ENCODE measurements at regions of chr12 and their contacts with region 1.

Region 1: DNA sequence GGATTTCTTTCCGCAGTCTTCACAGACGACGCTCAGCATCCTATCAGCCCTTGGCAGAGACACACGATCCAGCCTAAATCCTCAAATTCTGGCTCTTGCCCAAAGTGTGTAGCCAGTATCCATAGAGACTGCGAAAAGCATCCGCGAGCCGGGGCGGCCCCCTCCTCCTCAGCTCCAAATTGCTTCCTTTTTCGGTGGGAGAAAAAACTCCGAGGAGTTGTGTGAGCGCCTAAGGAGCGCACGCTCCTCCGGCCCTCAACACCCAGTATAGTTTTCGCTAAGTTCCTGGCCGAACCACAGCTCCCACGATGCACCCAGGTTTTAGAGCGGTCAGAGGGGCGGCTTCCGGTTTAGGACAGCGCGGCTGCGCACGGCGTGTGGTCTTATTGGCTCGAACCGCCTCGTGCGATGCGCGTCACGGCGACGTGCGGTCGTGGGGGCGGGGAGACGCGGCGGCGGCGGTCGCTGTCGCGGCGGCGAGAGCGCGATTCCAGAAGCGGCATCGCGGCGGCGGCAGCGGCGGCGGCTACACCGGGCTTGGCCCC is at the start of gene ADIPOR2:
- DNase-seq: peak; percentile 91 to 96 (median 95)
- ATAC-seq: peak; percentile 99
- H3K4me3 ChIP-seq: peak within 1 kb of the TSS; percentile 76
- H3K4me3 Mint-ChIP-seq: peak within 1 kb of the TSS; percentile 94 to 99 (median 98)
- H3K27ac ChIP-seq: peak within 1 kb of the TSS; percentile 91
- H3K27ac Mint-ChIP-seq: peak within 1 kb of the TSS; percentile 96 to 100 (median 98)
- H3K4me1 ChIP-seq: peaks cover 7 to 9% of the 10 kb centered on the region in 2 donors
- H3K4me1 Mint-ChIP-seq: peaks cover 26 to 59% (median 52%) of the 10 kb centered on the region in 7 donors
- H3K27me3 ChIP-seq: no peaks in the 10 kb centered on the region
- H3K27me3 Mint-ChIP-seq: peaks cover 0 to 13% (median 0%) of the 10 kb centered on the region in 5 donors
- total RNA-seq, gene ADIPOR2: 19.8 to 51.4 (median 36.4) TPM

Region 2: DNA sequence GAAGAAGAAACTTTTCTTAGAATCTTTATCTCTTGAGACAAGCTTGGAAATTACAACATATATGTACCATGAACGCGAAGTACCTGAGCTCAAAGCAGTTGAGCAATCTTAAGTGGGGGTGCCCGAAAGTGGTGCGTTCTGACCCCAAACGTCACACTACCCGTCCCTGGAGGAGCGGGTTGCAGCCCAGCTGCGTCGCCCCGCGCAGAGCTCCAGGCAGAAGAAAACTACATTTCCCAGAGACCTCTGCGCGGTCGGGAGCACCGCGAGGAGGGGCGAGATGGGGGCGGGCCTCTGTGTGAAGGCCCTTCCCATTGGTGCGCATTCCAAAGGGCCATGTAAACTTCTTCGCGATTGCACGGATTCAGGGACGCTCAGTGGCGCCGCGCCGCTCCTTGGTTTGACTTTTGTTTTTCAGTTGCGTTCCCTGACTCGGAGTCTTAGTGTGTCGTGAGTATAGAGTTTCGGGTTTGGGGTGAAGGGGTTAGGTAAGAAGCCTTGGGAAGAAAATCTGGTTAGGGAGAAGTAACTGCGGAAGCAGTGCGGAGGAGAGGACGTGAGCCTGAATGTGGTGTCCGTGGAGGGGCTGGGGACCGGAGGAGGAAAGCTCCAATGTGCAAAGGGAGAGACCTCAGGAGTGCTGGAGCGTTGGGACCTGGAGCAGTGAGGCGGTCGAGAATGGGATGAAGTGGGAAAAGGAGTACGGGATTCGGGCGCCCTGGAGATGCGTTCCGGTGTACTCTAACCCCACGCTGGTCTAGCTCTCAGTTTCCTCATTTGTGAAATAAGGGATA is 1289.2 kb before region 1 on chr12 and contains the start of gene CCDC77:
- CTCF ChIA-PET with region 1: no interaction called
- POLR2A ChIA-PET with region 1: no interaction called
- intact Hi-C with region 1: loop called in 1 of 2 experiments (anchors 5 kb)
- DNase-seq: peak; percentile 91 to 97 (median 95)
- ATAC-seq: peak; percentile 100
- H3K4me3 ChIP-seq: peak within 1 kb of the TSS; percentile 94
- H3K4me3 Mint-ChIP-seq: no peak within 1 kb of the TSS
- H3K27ac ChIP-seq: peak within 1 kb of the TSS; percentile 71
- H3K27ac Mint-ChIP-seq: peak within 1 kb of the TSS in 1 of 9 donors; percentile 62
- H3K4me1 ChIP-seq: peaks cover 4 to 13% of the 10 kb centered on the region in 2 donors
- H3K4me1 Mint-ChIP-seq: peaks cover 0 to 9% (median 5%) of the 10 kb centered on the region in 7 donors
- H3K27me3 ChIP-seq: no peaks in the 10 kb centered on the region
- H3K27me3 Mint-ChIP-seq: no peaks in the 10 kb centered on the region
- total RNA-seq, gene CCDC77: 9.7 to 15.6 (median 12.7) TPM

Region 3: DNA sequence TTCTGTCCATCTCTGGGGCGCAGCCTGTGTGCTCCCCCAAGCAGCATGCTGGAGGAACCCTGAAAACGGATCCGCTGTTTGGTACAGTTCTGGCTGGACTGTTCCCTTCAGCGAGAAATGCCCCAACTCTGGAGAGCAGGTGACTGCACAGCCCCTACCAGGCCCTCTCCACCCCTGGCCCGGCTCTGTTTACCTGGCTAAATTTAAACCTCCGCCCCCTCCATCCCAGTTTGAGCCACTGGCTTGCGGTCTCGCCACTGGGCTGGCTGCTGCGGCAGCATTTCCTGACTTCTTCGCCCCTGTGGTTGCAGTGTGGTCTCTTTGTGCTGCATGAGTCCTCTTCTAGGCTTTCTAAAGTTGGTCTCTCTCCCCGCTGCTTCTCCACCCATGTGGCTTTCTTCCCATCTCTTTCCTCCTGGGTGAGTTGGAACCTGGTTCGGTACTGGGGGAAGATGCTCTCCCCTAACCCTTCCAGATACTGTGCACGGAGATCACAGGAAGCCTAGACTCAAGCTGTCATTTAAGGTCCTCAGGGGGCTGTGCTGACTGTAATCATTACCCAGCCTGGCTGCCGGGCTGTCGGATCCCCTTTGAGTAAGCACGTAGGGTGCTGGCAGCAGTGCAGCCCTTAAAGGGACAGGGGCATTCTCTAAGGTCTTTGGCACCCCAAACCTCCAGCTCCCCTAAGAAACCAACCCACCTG is 156.9 kb before region 1 on chr12:
- CTCF ChIA-PET with region 1: no interaction called
- POLR2A ChIA-PET with region 1: no interaction called
- intact Hi-C with region 1: loop called in 1 of 2 experiments (anchors 1 kb)
- DNase-seq: peak in 6 of 9 donors; percentile 12 to 68 (median 30)
- ATAC-seq: peak; percentile 58
- H3K4me3 ChIP-seq: peak overlapping the region; percentile 48
- H3K4me3 Mint-ChIP-seq: peak overlapping the region; percentile 81 to 89 (median 85)
- H3K27ac ChIP-seq: no peak overlapping the region
- H3K27ac Mint-ChIP-seq: peak overlapping the region in 1 of 9 donors; percentile 40
- H3K4me1 ChIP-seq: peaks cover 32 to 34% of the 10 kb centered on the region in 2 donors
- H3K4me1 Mint-ChIP-seq: peaks cover 25 to 38% (median 29%) of the 10 kb centered on the region in 7 donors
- H3K27me3 ChIP-seq: peaks cover 19 to 36% of the 10 kb centered on the region in 2 donors
- H3K27me3 Mint-ChIP-seq: peaks cover 63 to 80% (median 77%) of the 10 kb centered on the region in 5 donors

Region 4: GRCh38 chr12:1650260-1650977 is 40.2 kb before region 1 on chr12:
- CTCF ChIA-PET with region 1: interaction called, 4 read pairs
- POLR2A ChIA-PET with region 1: interaction called, 3 read pairs
- intact Hi-C with region 1: loop called (anchors 2 kb)
- DNase-seq: no peak
- ATAC-seq: no peak
- H3K4me3 ChIP-seq: no peak overlapping the region
- H3K4me3 Mint-ChIP-seq: no peak overlapping the region
- H3K27ac ChIP-seq: no peak overlapping the region
- H3K27ac Mint-ChIP-seq: peak overlapping the region in 1 of 9 donors; percentile 46
- H3K4me1 ChIP-seq: no peaks in the 10 kb centered on the region
- H3K4me1 Mint-ChIP-seq: peaks cover 0 to 6% (median 4%) of the 10 kb centered on the region in 7 donors
- H3K27me3 ChIP-seq: no peaks in the 10 kb centered on the region
- H3K27me3 Mint-ChIP-seq: peaks cover 4 to 44% (median 9%) of the 10 kb centered on the region in 5 donors

Region 5: DNA sequence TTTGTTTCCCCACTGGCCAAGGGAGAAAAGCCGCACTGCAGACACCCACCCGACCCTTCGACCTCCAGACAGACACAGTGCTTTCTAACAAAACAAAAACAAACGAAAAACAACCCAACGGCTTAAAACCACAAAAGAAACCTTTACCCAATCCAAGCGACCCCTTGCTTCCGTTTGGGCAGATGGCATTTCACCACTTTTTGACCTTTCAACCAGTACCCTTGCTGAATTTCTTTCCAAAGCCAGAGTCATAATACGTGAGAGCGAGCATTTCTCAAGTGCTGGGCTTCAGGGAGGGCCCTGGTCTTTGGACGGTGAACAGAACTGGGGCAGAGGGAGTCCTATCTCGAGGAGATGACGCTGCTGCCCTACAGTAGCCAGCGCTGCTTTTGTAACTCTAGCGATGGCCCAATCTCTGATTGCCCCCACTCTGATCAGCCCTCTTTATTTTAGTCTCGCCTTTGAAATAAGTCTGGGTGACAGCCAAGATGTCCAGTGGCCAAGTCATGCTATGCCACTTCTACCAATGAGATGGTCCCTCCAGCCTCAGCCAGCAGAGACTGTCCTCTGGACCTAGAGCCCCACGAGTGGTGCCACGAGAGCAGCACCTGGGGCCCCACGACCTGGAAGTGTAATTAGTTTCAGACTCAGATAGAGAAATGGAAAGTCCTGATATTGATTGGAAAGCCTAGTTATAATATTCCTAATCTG is 21.7 kb before region 1 on chr12:
- CTCF ChIA-PET with region 1: interaction called, 3 read pairs
- POLR2A ChIA-PET with region 1: interaction called, 16 read pairs
- intact Hi-C with region 1: no loop called
- DNase-seq: no peak
- ATAC-seq: peak; percentile 83
- H3K4me3 ChIP-seq: no peak overlapping the region
- H3K4me3 Mint-ChIP-seq: peak overlapping the region in 3 of 10 donors; percentile 10 to 37 (median 11)
- H3K27ac ChIP-seq: no peak overlapping the region
- H3K27ac Mint-ChIP-seq: peak overlapping the region in 8 of 9 donors; percentile 5 to 88 (median 14)
- H3K4me1 ChIP-seq: peaks cover 10 to 25% of the 10 kb centered on the region in 2 donors
- H3K4me1 Mint-ChIP-seq: peaks cover 23 to 46% (median 41%) of the 10 kb centered on the region in 7 donors
- H3K27me3 ChIP-seq: no peaks in the 10 kb centered on the region
- H3K27me3 Mint-ChIP-seq: peaks cover 0 to 2% (median 0%) of the 10 kb centered on the region in 5 donors

Region 6: GRCh38 chr12:1776170-1776948 is 85.7 kb after region 1 on chr12:
- CTCF ChIA-PET with region 1: no interaction called
- POLR2A ChIA-PET with region 1: no interaction called
- intact Hi-C with region 1: no loop called
- DNase-seq: no peak
- ATAC-seq: no peak
- H3K4me3 ChIP-seq: no peak overlapping the region
- H3K4me3 Mint-ChIP-seq: no peak overlapping the region
- H3K27ac ChIP-seq: no peak overlapping the region
- H3K27ac Mint-ChIP-seq: peak overlapping the region in 3 of 9 donors; percentile 13 to 46 (median 43)
- H3K4me1 ChIP-seq: no peaks in the 10 kb centered on the region
- H3K4me1 Mint-ChIP-seq: peaks cover 2 to 22% (median 20%) of the 10 kb centered on the region in 7 donors
- H3K27me3 ChIP-seq: no peaks in the 10 kb centered on the region
- H3K27me3 Mint-ChIP-seq: no peaks in the 10 kb centered on the region

Region 7: GRCh38 chr12:1804545-1805332 is 114.1 kb after region 1 on chr12:
- CTCF ChIA-PET with region 1: no interaction called
- POLR2A ChIA-PET with region 1: no interaction called
- intact Hi-C with region 1: loop called in 1 of 2 experiments (anchors 1 kb)
- DNase-seq: peak; percentile 58 to 86 (median 79)
- ATAC-seq: peak; percentile 98
- H3K4me3 ChIP-seq: peak overlapping the region; percentile 26
- H3K4me3 Mint-ChIP-seq: peak overlapping the region in 5 of 10 donors; percentile 21 to 44 (median 29)
- H3K27ac ChIP-seq: peak overlapping the region; percentile 63
- H3K27ac Mint-ChIP-seq: peak overlapping the region in 8 of 9 donors; percentile 55 to 90 (median 76)
- H3K4me1 ChIP-seq: peaks cover 6 to 7% of the 10 kb centered on the region in 2 donors
- H3K4me1 Mint-ChIP-seq: peaks cover 5 to 12% (median 6%) of the 10 kb centered on the region in 7 donors
- H3K27me3 ChIP-seq: no peaks in the 10 kb centered on the region
- H3K27me3 Mint-ChIP-seq: no peaks in the 10 kb centered on the region